ENCODE measurements at regions of chr1 and their contacts with region 1.

Region 1: GRCh38 chr1:157369808-157370521 is 182.3 kb downstream of the FCRL5 start:
- DNase-seq: no peak
- ATAC-seq: peak; percentile 54

Region 2: GRCh38 chr1:157487096-157487495 is 117.1 kb after region 1 on chr1:
- intact Hi-C with region 1: loop called (anchors 10 kb)
- DNase-seq: no peak
- ATAC-seq: no peak

Measured in left ventricle myocardium superior (tissue), 1 donor.